ENCODE measurements at regions of chr19 and their contacts with region 1.

Region 1: GRCh38 chr19:5622463-5623396 is at the starts of genes SAFB and SAFB2:
- DNase-seq: peak; percentile 99 to 100
- H3K4me3 ChIP-seq: peak within 1 kb of the TSS; percentile 80 to 92
- H3K27ac ChIP-seq: peak within 1 kb of the TSS; percentile 94 to 98
- H3K4me1 ChIP-seq: peaks cover 0 to 66% (median 56%) of the 10 kb centered on the region in 4 donors
- H3K27me3 ChIP-seq: no peaks in the 10 kb centered on the region
- CTCF ChIP-seq: no peak

Region 2: GRCh38 chr19:5690125-5690954 is 67.6 kb after region 1 on chr19 and contains the start of gene RPL36:
- intact Hi-C with region 1: loop called (anchors 10 kb)
- DNase-seq: peak; percentile 96 to 99
- H3K4me3 ChIP-seq: peak within 1 kb of the TSS; percentile 58 to 64
- H3K27ac ChIP-seq: peak within 1 kb of the TSS; percentile 86 to 88
- H3K4me1 ChIP-seq: peaks cover 5 to 46% (median 23%) of the 10 kb centered on the region in 4 donors
- H3K27me3 ChIP-seq: no peaks in the 10 kb centered on the region
- CTCF ChIP-seq: peak; percentile 96 to 97

Region 3: GRCh38 chr19:5839065-5840017 is 216.6 kb after region 1 on chr19 and contains the start of gene FUT6:
- intact Hi-C with region 1: no loop called
- DNase-seq: no peak
- H3K4me3 ChIP-seq: no peak within 1 kb of the TSS
- H3K27ac ChIP-seq: no peak within 1 kb of the TSS
- H3K4me1 ChIP-seq: no peaks in the 10 kb centered on the region
- H3K27me3 ChIP-seq: peaks cover 0 to 56% of the 10 kb centered on the region in 2 donors
- CTCF ChIP-seq: no peak

Measured in tibial artery (tissue), 4 donors.